HEK293 (cell line): ENCODE measurements at regions of chr1 and their contacts with region 1.

Region 1: GRCh38 chr1:8987881-8988617 is 38.2 kb downstream of the SLC2A7 start:
- H3K4me3 ChIP-seq: no peak overlapping the region
- H3K27ac ChIP-seq: no peak overlapping the region
- H3K4me1 ChIP-seq: no peaks in the 10 kb centered on the region
- CTCF ChIP-seq: peak; percentile 30

Region 2: GRCh38 chr1:8911416-8911815 is 76.6 kb before region 1 on chr1:
- CTCF ChIA-PET with region 1: interaction called, 18 read pairs
- POLR2A ChIA-PET with region 1: no interaction called
- H3K4me3 ChIP-seq: no peak overlapping the region
- H3K27ac ChIP-seq: no peak overlapping the region
- H3K4me1 ChIP-seq: peaks cover 6% of the 10 kb centered on the region
- CTCF ChIP-seq: no peak

Region 3: GRCh38 chr1:8962812-8963530 is 25.1 kb before region 1 on chr1:
- CTCF ChIA-PET with region 1: interaction called, 44 read pairs
- POLR2A ChIA-PET with region 1: no interaction called
- H3K4me3 ChIP-seq: no peak overlapping the region
- H3K27ac ChIP-seq: no peak overlapping the region
- H3K4me1 ChIP-seq: no peaks in the 10 kb centered on the region
- CTCF ChIP-seq: peak; percentile 38; the same call in 1 of the 2 replicates